ENCODE measurements at regions of chr10 and their contacts with region 1.

Region 1: GRCh38 chr10:4241724-4242345 is 456.8 kb upstream of the KLF6 start:
- DNase-seq: peak in 1 of 2 donors; percentile 76
- H3K4me3 ChIP-seq: peak overlapping the region; percentile 53 to 61
- H3K27ac ChIP-seq: peak overlapping the region; percentile 87 to 94
- H3K4me1 ChIP-seq: peaks cover 0 to 18% of the 10 kb centered on the region in 2 donors
- H3K27me3 ChIP-seq: no peaks in the 10 kb centered on the region
- CTCF ChIP-seq: no peak

Region 2: GRCh38 chr10:3226960-3227744 is 1014.7 kb before region 1 on chr10:
- intact Hi-C with region 1: loop called (anchors 5 kb)
- DNase-seq: no peak
- H3K4me3 ChIP-seq: peak overlapping the region in 1 of 2 donors; percentile 7
- H3K27ac ChIP-seq: peak overlapping the region; percentile 44 to 60
- H3K4me1 ChIP-seq: peaks cover 0 to 21% of the 10 kb centered on the region in 2 donors
- H3K27me3 ChIP-seq: no peaks in the 10 kb centered on the region
- CTCF ChIP-seq: no peak

Region 3: GRCh38 chr10:3852147-3852904 is 389.5 kb before region 1 on chr10:
- intact Hi-C with region 1: loop called (anchors 5 kb)
- DNase-seq: peak; percentile 68 to 93
- H3K4me3 ChIP-seq: peak overlapping the region in 1 of 2 donors; percentile 15
- H3K27ac ChIP-seq: peak overlapping the region; percentile 85 to 87
- H3K4me1 ChIP-seq: peaks cover 4 to 36% of the 10 kb centered on the region in 2 donors
- H3K27me3 ChIP-seq: no peaks in the 10 kb centered on the region
- CTCF ChIP-seq: no peak

Region 4: DNA sequence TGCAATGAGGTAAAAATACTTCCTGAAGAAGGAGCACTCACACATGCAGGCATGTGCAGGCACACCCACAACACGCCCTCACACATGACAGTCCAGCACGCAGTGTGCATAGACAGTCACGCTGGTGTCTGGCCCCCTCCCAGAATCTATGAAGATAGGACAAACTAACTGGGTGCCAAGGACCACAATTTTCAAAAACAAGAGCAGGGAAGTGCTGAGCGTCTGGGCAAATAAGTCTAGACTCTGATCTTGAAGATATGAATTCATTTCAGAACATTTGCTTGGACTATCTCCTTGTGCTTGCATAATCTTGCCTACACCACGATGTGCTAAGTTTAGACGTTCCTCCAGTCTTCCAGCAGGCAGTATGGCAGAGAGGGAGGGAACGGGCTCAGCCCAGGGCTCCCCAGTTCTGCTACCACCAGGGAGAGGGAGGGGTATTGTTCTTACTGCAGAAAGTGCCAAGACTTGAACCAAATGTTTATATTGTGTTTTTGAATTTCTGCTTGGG is 180.3 kb before region 1 on chr10:
- intact Hi-C with region 1: loop called (anchors 5 kb)
- DNase-seq: peak; percentile 51 to 92
- H3K4me3 ChIP-seq: peak overlapping the region in 1 of 2 donors; percentile 1
- H3K27ac ChIP-seq: peak overlapping the region; percentile 60 to 71
- H3K4me1 ChIP-seq: peaks cover 5 to 45% of the 10 kb centered on the region in 2 donors
- H3K27me3 ChIP-seq: no peaks in the 10 kb centered on the region
- CTCF ChIP-seq: no peak

Region 5: GRCh38 chr10:4212111-4212635 is 29.7 kb before region 1 on chr10:
- intact Hi-C with region 1: no loop called
- DNase-seq: no peak
- H3K4me3 ChIP-seq: no peak overlapping the region
- H3K27ac ChIP-seq: no peak overlapping the region
- H3K4me1 ChIP-seq: peaks cover 0 to 8% of the 10 kb centered on the region in 2 donors
- H3K27me3 ChIP-seq: no peaks in the 10 kb centered on the region
- CTCF ChIP-seq: no peak

Region 6: GRCh38 chr10:4498711-4499251 is 256.9 kb after region 1 on chr10:
- intact Hi-C with region 1: loop called (anchors 1 kb)
- DNase-seq: no peak
- H3K4me3 ChIP-seq: no peak overlapping the region
- H3K27ac ChIP-seq: peak overlapping the region; percentile 93 to 95
- H3K4me1 ChIP-seq: peaks cover 8 to 20% of the 10 kb centered on the region in 2 donors
- H3K27me3 ChIP-seq: no peaks in the 10 kb centered on the region
- CTCF ChIP-seq: no peak

Region 7: GRCh38 chr10:4512671-4513240 is 270.9 kb after region 1 on chr10:
- intact Hi-C with region 1: no loop called
- DNase-seq: no peak
- H3K4me3 ChIP-seq: no peak overlapping the region
- H3K27ac ChIP-seq: no peak overlapping the region
- H3K4me1 ChIP-seq: peaks cover 0 to 12% of the 10 kb centered on the region in 2 donors
- H3K27me3 ChIP-seq: no peaks in the 10 kb centered on the region
- CTCF ChIP-seq: peak in 2 of 3 experiments; percentile 15 to 55

Region 8: GRCh38 chr10:4767033-4767814 is 525.4 kb after region 1 on chr10:
- intact Hi-C with region 1: loop called (anchors 2 kb)
- DNase-seq: no peak
- H3K4me3 ChIP-seq: no peak overlapping the region
- H3K27ac ChIP-seq: no peak overlapping the region
- H3K4me1 ChIP-seq: peaks cover 0 to 15% of the 10 kb centered on the region in 2 donors
- H3K27me3 ChIP-seq: no peaks in the 10 kb centered on the region
- CTCF ChIP-seq: peak; percentile 65 to 81 (median 73)